Panc1 (cell line): ENCODE measurements at regions of chr20 and their contacts with region 1.

Region 1: GRCh38 chr20:30963591-30963990 is 293.9 kb upstream of the DEFB115 start:
- DNase-seq: no peak
- ATAC-seq: no peak
- H3K4me3 ChIP-seq: no peak overlapping the region
- H3K27ac ChIP-seq: no peak overlapping the region
- H3K4me1 ChIP-seq: no peaks in the 10 kb centered on the region
- H3K27me3 ChIP-seq: no peaks in the 10 kb centered on the region
- CTCF ChIP-seq: no peak

Region 2: DNA sequence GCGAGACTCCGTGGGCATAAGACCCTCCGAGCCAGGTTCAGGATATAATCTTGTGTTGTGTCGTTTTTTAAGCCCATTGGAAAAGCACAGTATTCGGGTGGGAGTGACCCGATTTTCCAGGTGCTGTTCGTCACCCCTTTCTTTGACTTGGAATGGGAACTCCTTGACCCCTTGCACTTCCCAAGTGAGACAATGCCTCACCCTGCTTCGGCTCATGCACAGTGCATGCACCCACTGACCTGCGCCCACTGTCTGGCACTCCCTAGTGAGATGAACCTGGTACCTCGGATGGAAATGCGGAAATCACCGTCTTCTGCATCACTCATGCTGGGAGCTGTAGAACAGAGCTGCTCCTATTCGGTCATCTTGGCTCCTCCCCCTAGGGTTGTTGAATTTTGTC is 13.8 kb before region 1 on chr20:
- CTCF ChIA-PET with region 1: no interaction called
- POLR2A ChIA-PET with region 1: no interaction called
- in situ Hi-C with region 1: no loop called
- intact Hi-C with region 1: loop called (anchors 2 kb)
- DNase-seq: no peak
- ATAC-seq: no peak
- H3K4me3 ChIP-seq: no peak overlapping the region
- H3K27ac ChIP-seq: no peak overlapping the region
- H3K4me1 ChIP-seq: no peaks in the 10 kb centered on the region
- H3K27me3 ChIP-seq: no peaks in the 10 kb centered on the region
- CTCF ChIP-seq: no peak